ENCODE measurements at regions of chr6 and their contacts with region 1.

Region 1: DNA sequence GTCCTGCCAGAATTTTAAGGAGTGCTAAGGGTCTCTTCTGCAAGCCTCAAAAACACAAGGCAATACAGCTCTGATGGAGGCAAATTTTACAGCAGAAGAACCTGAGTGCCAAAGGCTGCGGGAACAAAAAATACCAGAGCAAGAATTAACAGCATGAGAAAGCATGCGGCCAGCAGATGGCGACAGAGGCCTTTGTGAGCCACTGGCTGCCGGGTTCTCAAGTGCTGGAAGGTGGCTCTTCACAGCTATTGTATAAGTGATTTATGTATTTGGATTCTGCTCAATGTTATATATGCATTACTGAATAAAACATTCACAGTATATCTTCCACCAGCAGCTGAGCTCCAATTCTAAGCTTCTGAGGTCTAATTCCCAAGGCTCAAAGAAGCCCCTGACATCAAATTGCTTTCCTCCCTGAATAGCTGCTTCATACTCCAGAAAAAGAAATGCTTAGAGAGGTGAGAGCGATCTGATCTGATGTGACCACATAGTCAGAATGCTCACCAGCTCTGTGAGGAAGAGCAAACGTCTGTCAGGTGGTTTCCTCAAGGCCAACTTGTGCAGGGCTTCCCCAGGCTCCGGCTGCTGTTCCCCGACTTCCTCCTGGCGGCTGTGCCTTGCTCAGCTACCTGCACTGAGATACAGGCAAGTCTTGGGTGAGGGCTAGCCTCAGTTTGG is 58.6 kb downstream of the PPP1R3G start:
- DNase-seq: peak; percentile 82
- H3K4me3 ChIP-seq: no peak overlapping the region
- H3K27ac ChIP-seq: no peak overlapping the region
- H3K4me1 ChIP-seq: no peaks in the 10 kb centered on the region
- H3K27me3 ChIP-seq: no peaks in the 10 kb centered on the region
- CTCF ChIP-seq: peak; percentile 84 to 87
- POLR2A ChIP-seq: no peak

Region 2: DNA sequence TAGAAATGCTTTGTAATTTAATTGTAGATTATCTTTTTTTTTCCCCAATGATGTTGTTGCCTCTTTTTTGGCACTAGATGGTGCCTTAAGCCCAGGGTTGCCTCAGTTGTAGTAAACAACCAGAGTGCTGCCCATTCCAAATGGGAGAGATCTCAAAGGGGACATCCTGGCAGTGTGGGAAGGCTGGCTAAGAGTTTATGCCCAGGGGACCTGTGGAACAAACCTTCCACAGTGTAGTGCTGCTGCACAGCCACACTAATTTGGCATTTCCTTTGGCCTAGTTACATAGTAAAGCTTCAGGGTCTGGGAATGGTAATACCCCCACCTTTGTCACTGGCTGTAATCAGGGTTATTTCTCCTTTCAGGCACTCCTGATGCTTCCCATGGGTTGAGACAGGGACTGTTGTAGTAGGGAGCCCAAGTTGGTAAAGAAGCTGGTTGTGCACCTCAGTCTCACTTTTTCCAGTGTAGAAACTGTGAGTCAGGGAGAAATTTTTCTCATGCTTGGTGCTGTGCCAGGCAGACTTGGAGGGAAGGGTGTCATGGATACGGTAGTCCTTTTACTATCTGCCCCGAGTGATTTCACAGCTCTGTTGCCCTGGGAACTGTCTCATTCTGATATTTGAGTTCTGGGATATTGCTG is 830.6 kb before region 1 on chr6:
- CTCF ChIA-PET with region 1: interaction called, 5 read pairs
- POLR2A ChIA-PET with region 1: no interaction called
- dilution Hi-C with region 1: no loop called
- intact Hi-C with region 1: loop called (anchors 2 kb)
- DNase-seq: peak; percentile 95
- H3K4me3 ChIP-seq: no peak overlapping the region
- H3K27ac ChIP-seq: peak overlapping the region; percentile 56
- H3K4me1 ChIP-seq: peaks cover 23% of the 10 kb centered on the region
- H3K27me3 ChIP-seq: no peaks in the 10 kb centered on the region
- CTCF ChIP-seq: peak; percentile 28 to 45
- POLR2A ChIP-seq: no peak

Region 3: GRCh38 chr6:5160206-5160605 is 16.4 kb after region 1 on chr6:
- CTCF ChIA-PET with region 1: interaction called, 10 read pairs
- POLR2A ChIA-PET with region 1: no interaction called
- dilution Hi-C with region 1: no loop called
- intact Hi-C with region 1: no loop called
- DNase-seq: no peak
- H3K4me3 ChIP-seq: no peak overlapping the region
- H3K27ac ChIP-seq: no peak overlapping the region
- H3K4me1 ChIP-seq: no peaks in the 10 kb centered on the region
- H3K27me3 ChIP-seq: no peaks in the 10 kb centered on the region
- CTCF ChIP-seq: no peak
- POLR2A ChIP-seq: no peak

Region 4: DNA sequence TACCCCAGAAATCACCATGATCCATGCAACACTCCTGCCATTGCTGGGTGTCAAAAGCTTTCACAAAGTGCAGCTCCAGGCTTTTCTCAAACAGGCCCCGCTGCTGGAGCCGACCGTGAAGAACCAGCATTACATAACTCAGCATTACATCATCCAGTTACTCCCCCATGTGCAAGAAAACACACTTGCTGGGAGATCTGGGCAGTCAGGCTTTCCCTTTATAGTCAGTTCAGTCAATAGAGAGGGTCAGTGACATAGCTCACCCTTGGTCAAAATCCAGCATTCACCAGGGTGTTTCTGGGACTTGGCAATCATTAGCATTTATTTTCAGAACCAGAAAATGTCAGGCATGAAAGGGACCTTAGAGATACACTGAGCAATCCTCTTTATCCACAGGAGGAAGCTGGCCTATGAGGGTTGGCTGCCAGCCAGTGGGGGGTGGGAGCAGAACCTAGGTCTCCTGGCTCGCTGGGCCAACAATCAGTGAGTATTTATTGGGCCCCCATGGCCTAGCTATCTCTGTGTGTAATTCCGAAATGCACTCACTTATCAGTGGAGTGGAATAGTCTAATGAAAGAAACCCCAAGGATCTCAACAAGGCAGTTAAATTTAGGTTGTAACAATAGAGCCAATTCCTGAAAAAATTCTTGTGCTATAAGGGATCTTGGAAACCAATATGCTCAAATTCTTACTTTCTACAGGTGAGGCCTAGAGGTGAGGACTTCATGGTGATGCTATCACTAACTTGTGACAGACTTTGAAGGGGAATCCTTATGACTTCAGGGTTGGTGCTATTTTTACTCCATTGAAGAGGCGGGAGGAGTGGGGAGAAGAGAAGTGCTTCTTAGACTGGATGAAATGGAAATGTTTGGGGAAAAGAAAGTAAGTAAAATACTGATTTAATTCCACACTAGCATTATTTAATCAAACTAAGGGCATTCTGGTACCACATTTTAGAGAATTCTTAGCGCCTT is 62.4 kb after region 1 on chr6:
- CTCF ChIA-PET with region 1: interaction called, 14 read pairs
- POLR2A ChIA-PET with region 1: no interaction called
- dilution Hi-C with region 1: no loop called
- intact Hi-C with region 1: no loop called
- DNase-seq: peak; percentile 74
- H3K4me3 ChIP-seq: no peak overlapping the region
- H3K27ac ChIP-seq: peak overlapping the region; percentile 32
- H3K4me1 ChIP-seq: peaks cover 27% of the 10 kb centered on the region
- H3K27me3 ChIP-seq: no peaks in the 10 kb centered on the region
- CTCF ChIP-seq: no peak
- POLR2A ChIP-seq: no peak

Region 5: DNA sequence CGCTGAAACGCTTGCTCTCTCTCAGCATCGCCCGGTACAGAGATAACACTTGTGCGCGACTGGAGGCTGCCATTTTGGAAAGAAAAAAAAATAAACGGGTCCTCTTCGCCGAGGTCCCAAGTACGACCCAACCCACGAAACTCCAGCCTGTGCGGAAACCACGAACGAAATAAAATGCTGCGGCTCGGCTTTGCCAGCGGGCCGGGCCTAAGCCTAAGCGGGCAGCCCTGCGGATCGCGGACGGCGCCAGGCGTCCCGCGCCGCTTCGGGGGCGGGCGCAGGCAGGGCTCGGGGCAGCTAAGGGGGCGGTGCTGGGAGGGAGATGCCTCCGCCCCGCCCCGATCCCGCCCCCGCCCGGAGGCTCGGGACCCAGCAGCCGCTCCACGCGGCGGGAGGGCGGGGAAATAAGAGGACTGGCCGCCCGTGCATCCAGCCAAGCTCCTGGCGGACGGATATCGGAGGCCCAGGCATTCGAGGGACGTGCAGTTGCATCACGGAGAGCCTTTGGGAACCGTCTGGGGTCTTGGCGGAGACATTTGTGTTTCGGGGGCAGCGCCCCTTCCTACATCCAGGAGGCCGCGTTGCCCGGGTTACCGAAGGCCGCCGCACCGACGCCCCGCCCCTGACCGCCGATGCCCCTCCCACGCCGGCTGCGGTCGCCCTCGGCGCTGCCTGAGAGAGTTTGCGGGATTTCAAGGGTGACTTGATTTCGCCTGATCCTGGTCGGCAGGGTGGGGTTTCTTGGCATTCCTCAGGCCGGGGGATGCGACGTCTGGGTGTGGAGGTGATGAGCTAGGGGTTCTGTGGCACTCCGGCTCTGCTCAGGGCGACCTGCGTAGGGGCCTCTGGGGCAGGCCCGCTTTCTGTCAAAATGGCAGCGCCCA is 117.1 kb after region 1 on chr6 and contains the starts of genes FARS2 and LYRM4:
- CTCF ChIA-PET with region 1: interaction called, 14 read pairs
- POLR2A ChIA-PET with region 1: no interaction called
- dilution Hi-C with region 1: no loop called
- intact Hi-C with region 1: loop called (anchors 1 kb)
- DNase-seq: peak; percentile 94
- H3K4me3 ChIP-seq: peak within 1 kb of the TSS; percentile 94 to 98 (median 96)
- H3K27ac ChIP-seq: peak within 1 kb of the TSS; percentile 89
- H3K4me1 ChIP-seq: peaks cover 9% of the 10 kb centered on the region
- H3K27me3 ChIP-seq: no peaks in the 10 kb centered on the region
- CTCF ChIP-seq: peak in 1 of 2 donors; percentile 27
- POLR2A ChIP-seq: peak; percentile 32
- total RNA-seq, gene FARS2: 19.6 and 20.5 TPM in 2 replicates
- total RNA-seq, gene LYRM4: 39.5 and 39.7 TPM in 2 replicates

Region 6: DNA sequence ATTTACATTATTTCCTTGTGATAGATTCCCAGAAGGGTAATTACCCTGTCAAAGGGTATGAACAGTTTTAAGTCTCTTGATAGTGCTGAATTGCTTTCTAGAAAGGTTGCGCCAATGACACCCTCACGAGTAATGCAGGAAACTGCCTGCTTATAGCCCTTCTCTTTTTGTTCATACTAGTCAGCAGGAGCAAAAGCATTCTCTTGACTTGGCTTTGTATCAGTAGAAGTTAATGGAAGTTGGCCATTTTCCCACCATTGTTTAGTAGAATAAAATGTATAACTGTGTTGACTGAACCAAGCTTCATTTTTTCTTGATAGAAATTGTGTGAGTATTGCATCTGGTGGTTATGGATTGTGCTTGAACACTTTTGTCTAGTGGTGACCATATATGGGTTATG is 217.6 kb after region 1 on chr6:
- CTCF ChIA-PET with region 1: interaction called, 10 read pairs
- POLR2A ChIA-PET with region 1: no interaction called
- dilution Hi-C with region 1: no loop called
- intact Hi-C with region 1: no loop called
- DNase-seq: peak; percentile 96
- H3K4me3 ChIP-seq: no peak overlapping the region
- H3K27ac ChIP-seq: peak overlapping the region; percentile 8
- H3K4me1 ChIP-seq: peaks cover 11% of the 10 kb centered on the region
- H3K27me3 ChIP-seq: no peaks in the 10 kb centered on the region
- CTCF ChIP-seq: no peak
- POLR2A ChIP-seq: no peak

Region 7: DNA sequence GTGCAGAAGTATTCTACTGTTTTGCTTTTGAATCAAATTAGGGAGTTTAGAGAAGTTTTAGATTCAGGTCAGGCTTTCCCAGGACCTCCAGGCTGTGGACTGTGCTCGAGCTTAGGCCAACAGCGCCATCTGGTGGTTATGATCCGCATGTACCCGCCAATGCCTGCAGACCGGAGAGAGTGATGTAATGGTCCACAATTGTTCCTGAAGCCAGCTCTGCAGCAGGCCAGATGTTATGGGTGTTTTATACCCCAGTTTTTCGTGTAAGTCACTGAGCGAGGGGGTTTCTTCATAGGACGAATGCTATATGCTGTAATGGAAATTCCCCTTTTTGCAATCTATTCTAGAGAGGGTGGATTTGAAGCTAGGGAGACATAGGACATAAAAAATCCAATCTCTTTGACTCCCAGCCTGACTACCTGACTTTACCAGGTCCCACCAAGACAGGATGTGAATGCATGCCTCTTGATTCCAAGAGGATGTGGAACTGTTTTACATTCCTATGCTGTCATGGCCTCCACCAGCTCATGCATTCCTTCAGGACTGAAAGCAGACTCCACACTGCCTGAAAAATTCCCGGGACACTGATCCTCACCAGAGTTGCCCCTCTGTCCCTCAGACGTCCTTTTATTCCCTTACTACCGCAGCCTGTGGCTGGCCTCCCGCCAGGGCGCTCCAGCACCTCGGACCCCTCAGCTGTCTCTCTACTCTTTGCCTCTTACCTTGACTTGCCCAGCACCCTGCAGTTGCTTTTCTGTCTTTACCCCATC is 1403.5 kb after region 1 on chr6:
- CTCF ChIA-PET with region 1: interaction called, 29 read pairs
- POLR2A ChIA-PET with region 1: no interaction called
- dilution Hi-C with region 1: no loop called
- intact Hi-C with region 1: loop called (anchors 1 kb)
- DNase-seq: peak; percentile 84
- H3K4me3 ChIP-seq: peak overlapping the region in 2 of 3 experiments; percentile 10 to 21
- H3K27ac ChIP-seq: no peak overlapping the region
- H3K4me1 ChIP-seq: no peaks in the 10 kb centered on the region
- H3K27me3 ChIP-seq: peaks cover 11 to 19% of the 10 kb centered on the region in 2 experiments
- CTCF ChIP-seq: peak; percentile 87
- POLR2A ChIP-seq: no peak

Measured in endothelial cell of umbilical vein (primary cell).